Endothelial cell of umbilical vein (primary cell): ENCODE measurements at regions of chr6 and their contacts with region 1.

Region 1: GRCh38 chr6:28080631-28081485 is 490 bp downstream of the ZNF165 start:
- DNase-seq: peak; percentile 97
- H3K4me3 ChIP-seq: peak overlapping the region; percentile 1 to 73 (median 64)
- H3K27ac ChIP-seq: peak overlapping the region; percentile 87
- H3K4me1 ChIP-seq: peaks cover 9% of the 10 kb centered on the region
- H3K27me3 ChIP-seq: no peaks in the 10 kb centered on the region
- CTCF ChIP-seq: no peak
- POLR2A ChIP-seq: peak; percentile 36

Region 2: DNA sequence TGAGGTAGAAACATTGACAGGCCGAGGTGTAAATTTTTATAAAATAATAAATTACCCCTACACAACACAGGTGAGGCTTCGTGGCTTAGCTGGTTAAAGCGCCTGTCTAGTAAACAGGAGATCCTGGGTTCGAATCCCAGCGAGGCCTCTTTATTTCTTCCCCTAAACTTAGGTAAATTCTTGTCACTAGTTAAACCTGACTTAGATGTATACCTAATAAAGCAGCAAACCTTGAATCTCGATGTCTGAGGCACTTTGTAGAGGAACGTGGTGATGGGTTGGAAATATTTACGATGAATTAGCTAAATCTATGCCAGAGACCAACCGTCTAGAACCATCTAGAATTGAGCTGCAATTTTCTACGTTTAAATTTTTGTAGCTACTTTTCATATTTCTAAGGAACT is 354.2 kb before region 1 on chr6:
- CTCF ChIA-PET with region 1: no interaction called
- POLR2A ChIA-PET with region 1: no interaction called
- dilution Hi-C with region 1: no loop called
- intact Hi-C with region 1: no loop called
- DNase-seq: no peak
- H3K4me3 ChIP-seq: no peak overlapping the region
- H3K27ac ChIP-seq: no peak overlapping the region
- H3K4me1 ChIP-seq: no peaks in the 10 kb centered on the region
- H3K27me3 ChIP-seq: no peaks in the 10 kb centered on the region
- CTCF ChIP-seq: no peak
- POLR2A ChIP-seq: no peak

Region 3: GRCh38 chr6:28104392-28105244 is 23.8 kb after region 1 on chr6:
- CTCF ChIA-PET with region 1: interaction called, 5 read pairs
- POLR2A ChIA-PET with region 1: no interaction called
- dilution Hi-C with region 1: no loop called
- intact Hi-C with region 1: loop called (anchors 1 kb)
- DNase-seq: peak; percentile 72
- H3K4me3 ChIP-seq: peak overlapping the region; percentile 47 to 72 (median 70)
- H3K27ac ChIP-seq: no peak overlapping the region
- H3K4me1 ChIP-seq: peaks cover 6% of the 10 kb centered on the region
- H3K27me3 ChIP-seq: no peaks in the 10 kb centered on the region
- CTCF ChIP-seq: peak; percentile 29 to 55
- POLR2A ChIP-seq: peak; percentile 75

Region 4: DNA sequence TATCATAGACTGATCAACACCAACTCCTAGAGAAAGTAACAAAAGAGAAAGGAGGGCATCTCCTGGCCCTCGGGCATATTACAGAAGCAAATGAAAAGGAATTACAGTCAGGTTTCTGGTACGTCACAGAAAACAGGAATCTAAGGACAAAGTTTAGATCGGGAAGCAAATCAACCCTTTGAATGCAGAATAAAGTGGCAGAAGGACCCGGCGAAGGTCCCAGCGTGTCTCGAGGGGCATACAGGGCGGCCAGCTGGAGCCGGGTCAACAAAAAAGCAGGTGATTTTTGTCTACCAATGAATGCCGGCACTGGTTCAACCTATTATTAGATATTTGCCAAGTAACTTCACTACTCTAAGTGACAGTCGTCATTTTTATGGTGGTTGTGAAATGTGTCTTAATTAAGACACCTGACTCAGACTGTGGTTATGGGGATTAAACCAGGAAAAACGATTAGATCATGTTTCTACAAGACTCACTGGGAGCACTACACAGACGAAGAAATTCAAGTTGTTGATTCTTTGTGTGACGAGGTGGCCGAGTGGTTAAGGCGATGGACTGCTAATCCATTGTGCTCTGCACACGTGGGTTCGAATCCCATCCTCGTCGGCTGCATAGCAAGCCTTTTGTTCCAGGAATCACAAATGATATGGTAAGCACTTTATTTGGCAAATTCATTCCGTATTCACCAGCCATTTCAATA is 131.8 kb after region 1 on chr6:
- CTCF ChIA-PET with region 1: no interaction called
- POLR2A ChIA-PET with region 1: no interaction called
- dilution Hi-C with region 1: no loop called
- intact Hi-C with region 1: loop called (anchors 2 kb)
- DNase-seq: peak; percentile 90
- H3K4me3 ChIP-seq: peak overlapping the region; percentile 31 to 69 (median 62)
- H3K27ac ChIP-seq: no peak overlapping the region
- H3K4me1 ChIP-seq: peaks cover 14% of the 10 kb centered on the region
- H3K27me3 ChIP-seq: peaks cover 31 to 67% of the 10 kb centered on the region in 2 experiments
- CTCF ChIP-seq: no peak
- POLR2A ChIP-seq: no peak